AG04450 (cell line): ENCODE measurements at regions of chr16 and their contacts with region 1.

Region 1: DNA sequence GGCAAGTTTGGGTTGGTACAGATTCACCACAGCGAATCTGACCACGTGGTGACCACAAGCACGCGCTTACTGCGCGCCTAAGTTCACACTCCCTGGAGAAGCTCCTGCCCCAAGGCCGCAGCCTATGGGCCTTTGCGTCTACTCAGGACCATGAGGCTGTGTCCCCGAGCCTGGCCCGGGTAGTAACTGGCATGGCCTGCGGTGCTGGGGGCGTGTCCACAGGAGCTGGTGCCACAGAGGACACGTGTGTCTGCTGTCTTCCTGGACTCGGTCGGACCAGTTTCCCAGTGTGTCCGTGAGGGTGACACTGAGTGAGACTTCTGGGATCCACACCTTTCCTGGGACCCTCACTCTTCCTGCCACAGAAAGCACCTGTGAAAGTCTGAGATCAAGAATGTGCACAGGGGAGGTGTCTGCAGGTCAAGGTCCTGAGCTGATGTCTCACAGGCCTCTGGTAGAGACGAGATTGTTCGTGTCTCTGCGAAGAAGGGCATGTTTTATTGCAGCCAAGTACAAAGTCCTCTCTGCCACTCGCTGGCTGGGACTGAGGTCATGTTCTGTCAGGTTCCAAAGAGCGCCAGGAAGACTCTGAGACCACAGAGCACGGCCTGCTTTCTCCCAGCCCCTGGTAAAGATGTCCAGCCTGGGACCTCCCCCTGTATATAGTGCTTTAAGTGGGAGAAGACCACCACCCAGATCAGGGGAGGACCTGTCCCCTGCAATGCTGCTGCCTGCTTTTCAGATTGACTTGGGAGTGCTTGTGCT is 25.2 kb upstream of the CAPN15 start:
- DNase-seq: no peak
- H3K4me3 ChIP-seq: no peak overlapping the region
- H3K27ac ChIP-seq: no peak overlapping the region
- H3K27me3 ChIP-seq: no peaks in the 10 kb centered on the region
- CTCF ChIP-seq: no peak

Region 2: DNA sequence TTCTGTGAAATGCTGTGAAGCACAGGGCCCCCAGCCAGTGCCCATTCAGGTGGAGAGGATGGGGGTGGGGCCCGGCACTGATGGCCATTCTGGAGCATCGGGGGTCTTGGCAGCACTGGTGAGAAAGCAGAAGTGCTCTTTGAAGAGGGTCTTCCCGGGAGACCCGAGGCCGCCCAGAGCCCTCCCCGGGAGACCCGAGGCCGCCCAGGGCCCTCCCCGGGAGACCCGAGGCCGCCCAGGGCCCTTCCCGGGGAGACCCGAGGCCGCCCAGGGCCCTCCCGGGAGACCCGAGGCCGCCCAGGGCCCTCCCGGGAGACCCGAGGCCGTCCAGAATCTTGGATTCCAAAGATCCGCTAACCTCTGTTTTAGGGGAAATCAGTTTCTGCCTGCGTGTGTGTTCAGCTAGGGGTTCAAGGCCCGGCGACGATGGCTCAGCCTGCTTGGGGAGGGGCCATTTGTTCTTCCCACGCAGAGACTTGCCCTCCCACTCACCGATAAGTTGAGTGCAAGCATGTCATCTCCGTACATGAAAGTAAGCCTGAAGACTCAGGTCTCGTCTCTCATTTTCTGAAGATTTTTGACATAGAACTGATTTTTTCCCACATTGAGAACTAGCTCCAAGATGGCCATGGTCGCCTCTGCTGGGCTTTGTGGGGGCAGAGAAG is 10.0 kb before region 1 on chr16:
- CTCF ChIA-PET with region 1: interaction called, 3 read pairs
- POLR2A ChIA-PET with region 1: interaction called, 10 read pairs
- DNase-seq: no peak
- H3K4me3 ChIP-seq: no peak overlapping the region
- H3K27ac ChIP-seq: no peak overlapping the region
- H3K27me3 ChIP-seq: no peaks in the 10 kb centered on the region
- CTCF ChIP-seq: no peak